MCF 10A (cell line): ENCODE measurements at regions of chr1 and their contacts with region 1.

Region 1: DNA sequence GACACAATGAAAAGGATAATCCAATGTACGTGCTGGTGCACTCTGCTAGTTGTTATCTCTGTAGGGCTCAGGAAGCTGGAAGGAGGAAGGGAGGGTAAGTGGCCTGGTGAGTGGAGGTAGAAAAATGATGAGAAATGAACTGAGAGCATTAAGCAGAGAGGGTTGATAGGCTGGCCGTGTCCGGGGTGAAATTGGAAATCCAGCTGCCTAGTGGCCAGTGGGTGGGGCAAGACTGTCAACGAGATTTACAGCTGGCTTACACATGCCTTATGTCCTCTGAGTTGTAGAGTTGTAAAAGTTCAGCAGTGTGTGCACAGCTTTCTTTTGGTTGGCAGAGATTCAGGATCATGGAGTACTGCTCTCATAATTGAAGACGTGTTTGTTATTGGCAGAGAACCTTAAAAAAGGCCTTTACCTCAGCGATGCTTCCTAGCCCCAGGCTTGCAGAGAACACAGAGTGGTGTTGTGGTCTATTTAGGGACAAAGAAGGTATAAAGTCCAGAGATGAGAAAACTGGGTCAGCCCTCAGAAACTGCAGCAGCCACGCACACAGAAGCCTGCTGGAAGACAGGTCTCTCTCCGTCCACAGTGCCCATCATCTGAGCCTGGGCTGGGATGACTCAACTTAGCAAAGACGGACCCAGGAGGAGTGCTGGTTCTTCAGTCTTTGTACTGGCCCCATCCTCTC is 132.4 kb downstream of the EDEM3 start:
- DNase-seq: peak; percentile 98
- H3K4me3 Mint-ChIP-seq: peak overlapping the region; percentile 42
- H3K27ac Mint-ChIP-seq: peak overlapping the region; percentile 74
- H3K4me1 Mint-ChIP-seq: peaks cover 64% of the 10 kb centered on the region
- H3K27me3 Mint-ChIP-seq: no peaks in the 10 kb centered on the region
- CTCF ChIP-seq: no peak

Region 2: GRCh38 chr1:184289825-184290550 is 332.3 kb before region 1 on chr1:
- CTCF ChIA-PET with region 1: no interaction called
- POLR2A ChIA-PET with region 1: no interaction called
- intact Hi-C with region 1: no loop called
- DNase-seq: peak; percentile 90
- H3K4me3 Mint-ChIP-seq: no peak overlapping the region
- H3K27ac Mint-ChIP-seq: no peak overlapping the region
- H3K4me1 Mint-ChIP-seq: no peaks in the 10 kb centered on the region
- H3K27me3 Mint-ChIP-seq: no peaks in the 10 kb centered on the region
- CTCF ChIP-seq: no peak

Region 3: GRCh38 chr1:184485751-184486723 is 136.2 kb before region 1 on chr1:
- CTCF ChIA-PET with region 1: no interaction called
- POLR2A ChIA-PET with region 1: no interaction called
- intact Hi-C with region 1: no loop called
- DNase-seq: peak; percentile 29
- H3K4me3 Mint-ChIP-seq: no peak overlapping the region
- H3K27ac Mint-ChIP-seq: peak overlapping the region; percentile 75
- H3K4me1 Mint-ChIP-seq: peaks cover 31% of the 10 kb centered on the region
- H3K27me3 Mint-ChIP-seq: no peaks in the 10 kb centered on the region
- CTCF ChIP-seq: no peak

Region 4: GRCh38 chr1:184595591-184595990 is 26.7 kb before region 1 on chr1:
- CTCF ChIA-PET with region 1: no interaction called
- POLR2A ChIA-PET with region 1: interaction called, 10 read pairs
- intact Hi-C with region 1: no loop called
- DNase-seq: peak; percentile 85
- H3K4me3 Mint-ChIP-seq: no peak overlapping the region
- H3K27ac Mint-ChIP-seq: peak overlapping the region; percentile 3
- H3K4me1 Mint-ChIP-seq: peaks cover 30% of the 10 kb centered on the region
- H3K27me3 Mint-ChIP-seq: no peaks in the 10 kb centered on the region
- CTCF ChIP-seq: no peak

Region 5: GRCh38 chr1:184632415-184633175 is 10.3 kb after region 1 on chr1:
- CTCF ChIA-PET with region 1: interaction called, 3 read pairs
- POLR2A ChIA-PET with region 1: interaction called, 67 read pairs
- intact Hi-C with region 1: no loop called
- DNase-seq: peak; percentile 95
- H3K4me3 Mint-ChIP-seq: peak overlapping the region; percentile 4
- H3K27ac Mint-ChIP-seq: peak overlapping the region; percentile 86
- H3K4me1 Mint-ChIP-seq: peaks cover 64% of the 10 kb centered on the region
- H3K27me3 Mint-ChIP-seq: no peaks in the 10 kb centered on the region
- CTCF ChIP-seq: no peak

Region 6: GRCh38 chr1:184770181-184770979 is 148.1 kb after region 1 on chr1:
- CTCF ChIA-PET with region 1: no interaction called
- POLR2A ChIA-PET with region 1: no interaction called
- intact Hi-C with region 1: no loop called
- DNase-seq: no peak
- H3K4me3 Mint-ChIP-seq: no peak overlapping the region
- H3K27ac Mint-ChIP-seq: no peak overlapping the region
- H3K4me1 Mint-ChIP-seq: no peaks in the 10 kb centered on the region
- H3K27me3 Mint-ChIP-seq: peaks cover 34% of the 10 kb centered on the region
- CTCF ChIP-seq: no peak

Region 7: DNA sequence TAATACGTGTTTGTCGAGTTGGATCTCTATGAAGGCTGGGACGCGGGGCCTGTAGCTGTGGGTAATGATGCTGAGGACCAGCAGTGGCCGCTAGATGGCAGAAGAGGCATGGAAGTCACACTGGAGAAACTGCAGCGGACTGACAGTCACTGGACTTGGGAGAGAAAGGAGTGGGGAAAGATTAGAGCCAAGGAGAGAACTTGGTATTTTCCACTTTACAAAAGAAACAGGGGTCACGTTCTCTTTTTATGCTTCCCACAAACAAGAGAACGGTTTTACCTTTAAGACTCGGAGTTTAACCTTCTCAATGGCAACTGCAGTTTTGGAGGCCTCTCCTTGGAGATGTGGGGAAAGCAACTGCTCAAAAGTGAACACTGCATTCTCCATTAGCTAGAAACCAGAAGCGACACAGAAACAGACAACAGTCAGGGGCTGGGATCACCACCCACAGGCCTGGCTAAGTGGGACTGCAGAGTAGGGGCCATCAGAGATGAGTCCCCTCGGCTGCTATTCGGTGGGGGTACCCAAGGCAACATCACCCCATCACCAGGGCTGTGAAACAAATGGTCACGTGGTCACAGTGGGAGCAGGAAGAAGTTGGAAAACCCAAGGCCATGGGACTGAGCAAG is 183.5 kb after region 1 on chr1:
- CTCF ChIA-PET with region 1: no interaction called
- POLR2A ChIA-PET with region 1: no interaction called
- intact Hi-C with region 1: no loop called
- DNase-seq: peak; percentile 95
- H3K4me3 Mint-ChIP-seq: no peak overlapping the region
- H3K27ac Mint-ChIP-seq: no peak overlapping the region
- H3K4me1 Mint-ChIP-seq: peaks cover 6% of the 10 kb centered on the region
- H3K27me3 Mint-ChIP-seq: peaks cover 46% of the 10 kb centered on the region
- CTCF ChIP-seq: peak; percentile 99